ENCODE measurements at regions of chr20 and their contacts with region 1.

Region 1: GRCh38 chr20:49610701-49611538 is 43.0 kb upstream of the PTGIS start:
- DNase-seq: peak; percentile 82
- H3K4me3 Mint-ChIP-seq: peak overlapping the region; percentile 16
- H3K27ac Mint-ChIP-seq: peak overlapping the region; percentile 60
- H3K4me1 Mint-ChIP-seq: peaks cover 26% of the 10 kb centered on the region
- H3K27me3 Mint-ChIP-seq: peaks cover 22% of the 10 kb centered on the region

Region 2: GRCh38 chr20:49534255-49534712 is 76.6 kb before region 1 on chr20:
- CTCF ChIA-PET with region 1: interaction called, 532 read pairs
- DNase-seq: peak; percentile 76
- H3K4me3 Mint-ChIP-seq: no peak overlapping the region
- H3K27ac Mint-ChIP-seq: peak overlapping the region; percentile 31
- H3K4me1 Mint-ChIP-seq: peaks cover 20% of the 10 kb centered on the region
- H3K27me3 Mint-ChIP-seq: peaks cover 67% of the 10 kb centered on the region

Region 3: GRCh38 chr20:49549811-49550551 is 60.9 kb before region 1 on chr20:
- CTCF ChIA-PET with region 1: interaction called, 532 read pairs
- DNase-seq: no peak
- H3K4me3 Mint-ChIP-seq: no peak overlapping the region
- H3K27ac Mint-ChIP-seq: no peak overlapping the region
- H3K4me1 Mint-ChIP-seq: peaks cover 12% of the 10 kb centered on the region
- H3K27me3 Mint-ChIP-seq: peaks cover 30% of the 10 kb centered on the region

Region 4: GRCh38 chr20:49594143-49594930 is 16.6 kb before region 1 on chr20:
- CTCF ChIA-PET with region 1: interaction called, 60 read pairs
- DNase-seq: peak; percentile 86
- H3K4me3 Mint-ChIP-seq: peak overlapping the region; percentile 76
- H3K27ac Mint-ChIP-seq: peak overlapping the region; percentile 98
- H3K4me1 Mint-ChIP-seq: peaks cover 90% of the 10 kb centered on the region
- H3K27me3 Mint-ChIP-seq: peaks cover 7% of the 10 kb centered on the region

Region 5: GRCh38 chr20:49888345-49888966 is 277.5 kb after region 1 on chr20:
- CTCF ChIA-PET with region 1: interaction called, 10 read pairs
- DNase-seq: peak; percentile 66
- H3K4me3 Mint-ChIP-seq: no peak overlapping the region
- H3K27ac Mint-ChIP-seq: no peak overlapping the region
- H3K4me1 Mint-ChIP-seq: peaks cover 4% of the 10 kb centered on the region
- H3K27me3 Mint-ChIP-seq: no peaks in the 10 kb centered on the region

Measured in activated naive CD4-positive, alpha-beta T cell treated with anti-CD3 and anti-CD28 coated beads, Interleukin-2, amount 10 ng/mL, durations not matched to agents 7 days and 5 days (primary cell).